ENCODE measurements at regions of chr3 and their contacts with region 1.

Region 1: DNA sequence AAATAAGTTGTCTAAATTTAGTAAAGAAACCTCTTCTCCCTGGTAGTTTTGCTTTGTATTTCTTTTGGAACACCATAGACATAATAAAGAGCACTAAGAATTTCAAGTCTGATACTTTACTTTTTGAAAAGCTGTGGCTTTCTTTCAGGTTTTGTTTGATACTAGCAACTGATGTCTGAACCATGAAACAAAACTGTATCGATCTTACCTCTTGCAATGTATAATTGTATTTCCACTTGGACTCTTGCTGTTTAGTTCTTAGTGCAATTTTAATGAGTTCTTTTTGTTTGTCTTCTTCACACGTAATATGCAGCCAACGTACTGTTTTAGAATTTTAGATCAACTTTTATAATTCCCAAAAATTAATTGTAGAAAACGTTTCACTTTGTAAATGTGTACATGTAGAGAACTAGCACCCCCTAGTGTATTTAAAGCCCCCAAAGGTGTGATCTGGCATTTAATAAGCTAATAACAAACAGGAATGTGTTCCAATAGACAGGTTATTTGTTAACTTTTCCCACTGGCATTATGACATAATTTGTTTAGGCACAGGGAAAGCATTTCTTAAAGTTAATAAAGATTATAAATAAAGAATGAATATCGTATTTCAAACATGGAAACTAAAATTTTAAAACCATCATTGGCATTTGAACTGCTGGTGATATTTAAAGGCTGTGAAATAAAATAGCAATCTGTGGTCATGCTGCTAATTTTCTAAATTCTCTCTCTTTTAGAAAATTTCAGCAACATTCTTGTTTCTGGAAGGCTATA is 289.1 kb upstream of the DNAJC19 start:
- DNase-seq: no peak
- H3K4me3 ChIP-seq: no peak overlapping the region
- H3K27ac ChIP-seq: no peak overlapping the region
- H3K4me1 ChIP-seq: no peaks in the 10 kb centered on the region
- H3K27me3 ChIP-seq: no peaks in the 10 kb centered on the region
- CTCF ChIP-seq: peak in 1 of 5 experiments; percentile 12
- EP300 ChIP-seq: no peak
- POLR2A ChIP-seq: no peak

Region 2: DNA sequence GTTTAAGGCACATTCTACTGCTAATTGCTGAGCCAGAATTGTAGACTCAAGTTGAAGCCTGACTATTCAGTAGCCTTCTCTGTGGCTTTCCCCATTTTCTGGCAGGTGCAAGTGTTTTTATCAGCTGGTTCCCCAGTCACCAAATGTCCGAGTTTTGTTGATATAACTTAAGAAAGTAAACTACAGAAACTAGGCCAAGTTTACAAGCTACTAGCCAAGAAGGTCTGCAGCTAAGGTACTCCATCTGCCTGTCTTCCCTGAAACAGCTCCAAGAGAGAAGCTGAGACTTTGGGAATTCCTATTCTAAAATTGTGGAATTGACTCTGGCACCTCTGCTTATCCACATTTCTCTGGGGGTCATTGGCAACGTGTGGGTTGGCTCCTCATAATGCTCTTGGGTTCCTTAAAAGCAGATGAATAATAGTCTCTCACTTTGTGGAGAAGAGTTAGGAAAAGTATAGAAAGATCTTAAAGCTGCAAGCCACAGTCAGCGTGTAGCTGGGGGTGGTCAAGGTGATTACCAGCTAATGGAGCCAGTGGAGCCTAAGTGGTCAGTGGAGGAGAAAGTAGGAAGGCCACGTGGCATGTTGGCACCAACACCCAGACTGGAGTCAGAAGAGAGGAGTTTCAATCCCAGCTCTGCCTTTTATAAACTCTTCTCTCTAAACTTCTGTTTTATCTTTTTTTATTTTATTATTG is 1370.7 kb before region 1 on chr3:
- in situ Hi-C with region 1: no loop called
- intact Hi-C with region 1: loop called (anchors 5 kb)
- DNase-seq: no peak
- H3K4me3 ChIP-seq: no peak overlapping the region
- H3K27ac ChIP-seq: no peak overlapping the region
- H3K4me1 ChIP-seq: no peaks in the 10 kb centered on the region
- H3K27me3 ChIP-seq: peaks cover 5% of the 10 kb centered on the region
- CTCF ChIP-seq: no peak
- EP300 ChIP-seq: no peak
- POLR2A ChIP-seq: no peak

Measured in transverse colon (tissue), 4 donors.